Activated CD4-positive, alpha-beta T cell treated with anti-CD3 and anti-CD28 coated beads, Interleukin-2, amount 10 ng/mL, durations not matched to agents 24 days and 14 days (primary cell): ENCODE measurements at regions of chr4 and their contacts with region 1.

Region 1: GRCh38 chr4:110193822-110194761 is 4.3 kb downstream of the ELOVL6 start:
- DNase-seq: peak; percentile 94
- H3K4me3 Mint-ChIP-seq: peak overlapping the region; percentile 62
- H3K27ac Mint-ChIP-seq: peak overlapping the region; percentile 87
- H3K4me1 Mint-ChIP-seq: peaks cover 34% of the 10 kb centered on the region
- H3K27me3 Mint-ChIP-seq: no peaks in the 10 kb centered on the region

Region 2: GRCh38 chr4:109433205-109434006 is 760.7 kb before region 1 on chr4 and contains the start of gene SEC24B:
- intact Hi-C with region 1: loop called (anchors 5 kb)
- DNase-seq: peak; percentile 97
- H3K4me3 Mint-ChIP-seq: peak within 1 kb of the TSS; percentile 90
- H3K27ac Mint-ChIP-seq: peak within 1 kb of the TSS; percentile 85
- H3K4me1 Mint-ChIP-seq: peaks cover 50% of the 10 kb centered on the region
- H3K27me3 Mint-ChIP-seq: no peaks in the 10 kb centered on the region
- total RNA-seq, gene SEC24B: 32.5 and 33.6 TPM in 2 replicates

Region 3: GRCh38 chr4:109702950-109703663 is 491.0 kb before region 1 on chr4 and contains the start of gene CASP6:
- intact Hi-C with region 1: loop called (anchors 10 kb)
- DNase-seq: peak; percentile 94
- H3K4me3 Mint-ChIP-seq: peak within 1 kb of the TSS; percentile 94
- H3K27ac Mint-ChIP-seq: peak within 1 kb of the TSS; percentile 90
- H3K4me1 Mint-ChIP-seq: peaks cover 29% of the 10 kb centered on the region
- H3K27me3 Mint-ChIP-seq: no peaks in the 10 kb centered on the region
- total RNA-seq, gene CASP6: 19.3 and 23.6 TPM in 2 replicates

Region 4: GRCh38 chr4:110055158-110055768 is 138.8 kb before region 1 on chr4:
- intact Hi-C with region 1: loop called (anchors 1 kb)
- DNase-seq: peak; percentile 82
- H3K4me3 Mint-ChIP-seq: peak overlapping the region; percentile 67
- H3K27ac Mint-ChIP-seq: peak overlapping the region; percentile 74
- H3K4me1 Mint-ChIP-seq: peaks cover 62% of the 10 kb centered on the region
- H3K27me3 Mint-ChIP-seq: no peaks in the 10 kb centered on the region

Region 5: DNA sequence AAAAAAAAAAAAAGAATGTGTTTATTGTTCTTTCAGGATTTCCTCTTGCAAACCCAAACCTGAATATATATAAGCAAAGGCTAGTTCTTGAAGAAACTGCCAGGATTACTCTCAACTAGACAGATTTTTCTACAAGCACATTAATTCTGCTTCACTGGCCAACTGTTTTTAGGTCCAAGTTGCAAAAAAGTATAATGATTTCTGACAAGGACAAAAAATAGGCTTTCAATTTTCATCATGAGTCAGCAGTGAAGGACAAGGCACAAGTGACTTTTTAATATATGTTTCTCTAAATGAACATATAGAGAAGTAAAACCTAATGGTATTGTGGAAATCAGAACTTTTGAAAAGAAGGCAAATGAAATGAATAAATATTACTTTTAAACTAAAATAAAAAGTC is 69.4 kb before region 1 on chr4:
- intact Hi-C with region 1: loop called (anchors 5 kb)
- DNase-seq: no peak
- H3K4me3 Mint-ChIP-seq: no peak overlapping the region
- H3K27ac Mint-ChIP-seq: no peak overlapping the region
- H3K4me1 Mint-ChIP-seq: peaks cover 24% of the 10 kb centered on the region
- H3K27me3 Mint-ChIP-seq: no peaks in the 10 kb centered on the region

Region 6: GRCh38 chr4:110287130-110287529 is 93.0 kb after region 1 on chr4:
- intact Hi-C with region 1: loop called (anchors 1 kb)
- DNase-seq: peak; percentile 71
- H3K4me3 Mint-ChIP-seq: no peak overlapping the region
- H3K27ac Mint-ChIP-seq: peak overlapping the region; percentile 42
- H3K4me1 Mint-ChIP-seq: peaks cover 3% of the 10 kb centered on the region
- H3K27me3 Mint-ChIP-seq: peaks cover 42% of the 10 kb centered on the region

Region 7: GRCh38 chr4:111618908-111619307 is 1424.8 kb after region 1 on chr4:
- intact Hi-C with region 1: no loop called
- DNase-seq: no peak
- H3K4me3 Mint-ChIP-seq: no peak overlapping the region
- H3K27ac Mint-ChIP-seq: no peak overlapping the region
- H3K4me1 Mint-ChIP-seq: no peaks in the 10 kb centered on the region
- H3K27me3 Mint-ChIP-seq: no peaks in the 10 kb centered on the region